IMR-90 (cell line): ENCODE measurements at regions of chr6 and their contacts with region 1.

Region 1: GRCh38 chr6:100347901-100348550 is 116.7 kb downstream of the SIM1 start:
- DNase-seq: peak; percentile 83
- ATAC-seq: peak; percentile 60
- H3K4me3 ChIP-seq: no peak overlapping the region
- H3K27ac ChIP-seq: no peak overlapping the region
- H3K4me1 ChIP-seq: peaks cover 5% of the 10 kb centered on the region
- H3K27me3 ChIP-seq: no peaks in the 10 kb centered on the region
- CTCF ChIP-seq: no peak
- POLR2A ChIP-seq: no peak
- RAD21 ChIP-seq: no peak

Region 2: GRCh38 chr6:100176311-100176950 is 171.6 kb before region 1 on chr6:
- CTCF ChIA-PET with region 1: no interaction called
- POLR2A ChIA-PET with region 1: no interaction called
- dilution Hi-C with region 1: no loop called
- in situ Hi-C with region 1: no loop called
- intact Hi-C with region 1: loop called (anchors 2 kb)
- DNase-seq: peak; percentile 74
- ATAC-seq: peak; percentile 76
- H3K4me3 ChIP-seq: no peak overlapping the region
- H3K27ac ChIP-seq: peak overlapping the region; percentile 74
- H3K4me1 ChIP-seq: peaks cover 14% of the 10 kb centered on the region
- H3K27me3 ChIP-seq: no peaks in the 10 kb centered on the region
- CTCF ChIP-seq: peak; percentile 58
- POLR2A ChIP-seq: no peak
- RAD21 ChIP-seq: peak; percentile 54

Region 3: GRCh38 chr6:100300221-100300736 is 47.7 kb before region 1 on chr6:
- CTCF ChIA-PET with region 1: no interaction called
- POLR2A ChIA-PET with region 1: no interaction called
- dilution Hi-C with region 1: no loop called
- in situ Hi-C with region 1: no loop called
- intact Hi-C with region 1: loop called (anchors 5 kb)
- DNase-seq: peak; percentile 95
- ATAC-seq: peak; percentile 92
- H3K4me3 ChIP-seq: no peak overlapping the region
- H3K27ac ChIP-seq: peak overlapping the region; percentile 56
- H3K4me1 ChIP-seq: peaks cover 10% of the 10 kb centered on the region; the same call in 1 of the 2 replicates
- H3K27me3 ChIP-seq: no peaks in the 10 kb centered on the region
- CTCF ChIP-seq: no peak
- POLR2A ChIP-seq: no peak
- RAD21 ChIP-seq: no peak